Breast epithelium (tissue), 4 donors: ENCODE measurements at regions of chr10 and their contacts with region 1.

Region 1: DNA sequence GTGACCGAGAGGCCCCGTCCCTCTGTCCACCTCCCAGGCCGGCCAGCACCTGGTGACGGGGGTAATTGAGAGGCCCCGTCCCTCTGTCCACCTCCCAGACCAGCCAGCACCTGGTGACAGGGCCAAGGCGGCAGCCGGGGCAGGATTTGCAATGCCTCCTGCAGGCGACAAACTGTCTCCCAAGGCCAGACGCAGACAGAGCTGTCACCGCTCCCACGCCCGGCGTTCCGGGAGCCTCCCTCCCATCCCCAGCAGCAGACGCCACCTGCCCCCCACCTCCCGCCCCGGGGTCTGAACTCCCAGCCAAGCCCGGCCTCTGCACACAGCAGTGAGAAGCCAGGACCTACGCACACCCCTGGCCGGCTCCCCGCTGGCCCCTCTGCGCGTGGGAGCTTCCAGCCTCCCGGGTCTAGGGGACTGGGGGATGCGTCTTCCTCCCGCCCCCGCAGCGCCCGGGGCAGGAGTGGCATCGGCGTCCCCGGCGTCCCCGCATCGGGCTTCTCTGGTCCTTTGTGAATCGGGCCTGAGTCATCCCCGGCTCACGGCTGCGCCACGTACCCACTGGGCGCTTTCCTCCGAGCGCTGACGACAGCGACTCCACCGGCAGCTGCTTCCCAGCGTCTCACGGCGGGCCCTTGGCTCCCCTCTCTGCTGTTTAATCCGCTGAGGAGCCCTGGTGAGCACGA is 95.1 kb upstream of the DIP2C start:
- DNase-seq: peak; percentile 34 to 67
- H3K4me3 ChIP-seq: peak overlapping the region; percentile 26 to 58 (median 42)
- H3K27ac ChIP-seq: no peak overlapping the region
- H3K4me1 ChIP-seq: peaks cover 0 to 4% of the 10 kb centered on the region in 2 donors
- H3K27me3 ChIP-seq: no peaks in the 10 kb centered on the region
- CTCF ChIP-seq: no peak
- POLR2A ChIP-seq: no peak

Region 2: GRCh38 chr10:500876-501275 is 283.7 kb before region 1 on chr10:
- intact Hi-C with region 1: loop called (anchors 10 kb)
- DNase-seq: no peak
- H3K4me3 ChIP-seq: no peak overlapping the region
- H3K27ac ChIP-seq: no peak overlapping the region
- H3K4me1 ChIP-seq: no peaks in the 10 kb centered on the region
- H3K27me3 ChIP-seq: no peaks in the 10 kb centered on the region
- CTCF ChIP-seq: no peak
- POLR2A ChIP-seq: no peak

Region 3: GRCh38 chr10:2202401-2202800 is 1417.9 kb after region 1 on chr10:
- intact Hi-C with region 1: no loop called
- DNase-seq: no peak
- H3K4me3 ChIP-seq: no peak overlapping the region
- H3K27ac ChIP-seq: no peak overlapping the region
- H3K4me1 ChIP-seq: no peaks in the 10 kb centered on the region
- H3K27me3 ChIP-seq: no peaks in the 10 kb centered on the region
- CTCF ChIP-seq: no peak
- POLR2A ChIP-seq: no peak